Left ventricle myocardium superior (tissue), 1 donor: ENCODE measurements at regions of chr10 and their contacts with region 1.

Region 1: DNA sequence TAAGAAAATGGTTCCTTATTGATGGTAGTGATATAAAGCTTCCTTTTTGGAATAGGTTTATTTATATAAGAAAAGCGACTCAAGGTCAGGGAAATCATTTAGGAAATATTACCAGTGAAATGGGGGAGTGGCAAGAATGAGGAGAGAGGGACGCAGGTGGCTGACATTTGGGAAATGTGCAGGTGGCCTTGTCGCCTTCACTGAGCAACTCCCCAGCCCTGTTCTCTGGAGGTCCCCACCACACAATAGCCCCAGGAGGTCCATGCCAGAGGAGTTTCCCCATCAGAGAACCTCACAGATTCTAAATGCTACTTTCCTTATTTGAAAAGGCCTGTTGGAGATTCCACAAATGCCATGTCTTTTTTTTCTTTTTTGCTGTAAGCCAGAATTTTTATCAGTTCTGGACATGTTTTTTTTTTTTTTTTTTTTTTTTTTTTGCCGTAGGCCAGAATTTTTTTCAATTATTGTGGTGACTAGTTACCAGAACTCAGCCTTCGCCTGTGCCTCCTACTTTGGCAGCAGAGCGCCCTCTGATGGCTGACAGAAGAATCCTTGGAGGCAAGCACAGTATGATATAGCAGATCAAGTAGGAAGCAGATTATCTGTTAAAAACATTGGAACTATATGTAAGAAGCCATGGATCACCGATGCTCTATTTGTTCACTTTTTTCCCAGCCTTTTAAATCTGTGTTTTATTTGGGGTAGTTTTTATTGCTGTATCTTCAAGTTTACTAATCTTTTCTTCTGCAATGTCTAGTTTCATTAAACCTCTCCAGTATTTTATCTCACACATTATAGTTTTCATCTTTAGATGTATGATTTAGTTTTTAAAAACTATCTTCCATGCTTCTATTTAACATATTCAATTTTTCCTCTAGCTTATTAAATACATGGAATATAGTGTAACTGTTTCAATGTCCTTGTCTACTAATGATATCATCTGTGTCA is 18.6 kb downstream of the OPALIN start:
- DNase-seq: peak; percentile 63
- ATAC-seq: peak; percentile 83

Region 2: GRCh38 chr10:96017191-96017687 is 323.0 kb before region 1 on chr10:
- intact Hi-C with region 1: loop called (anchors 10 kb)
- DNase-seq: no peak
- ATAC-seq: peak; percentile 79

Region 3: GRCh38 chr10:96431211-96431970 is 91.2 kb after region 1 on chr10:
- intact Hi-C with region 1: no loop called
- DNase-seq: no peak
- ATAC-seq: peak; percentile 51